Cardiac septum (tissue), 1 donor: ENCODE measurements at regions of chr11 and their contacts with region 1.

Region 1: GRCh38 chr11:61947486-61948210 is 2.5 kb upstream of the BEST1 start:
- DNase-seq: peak; percentile 93

Region 2: DNA sequence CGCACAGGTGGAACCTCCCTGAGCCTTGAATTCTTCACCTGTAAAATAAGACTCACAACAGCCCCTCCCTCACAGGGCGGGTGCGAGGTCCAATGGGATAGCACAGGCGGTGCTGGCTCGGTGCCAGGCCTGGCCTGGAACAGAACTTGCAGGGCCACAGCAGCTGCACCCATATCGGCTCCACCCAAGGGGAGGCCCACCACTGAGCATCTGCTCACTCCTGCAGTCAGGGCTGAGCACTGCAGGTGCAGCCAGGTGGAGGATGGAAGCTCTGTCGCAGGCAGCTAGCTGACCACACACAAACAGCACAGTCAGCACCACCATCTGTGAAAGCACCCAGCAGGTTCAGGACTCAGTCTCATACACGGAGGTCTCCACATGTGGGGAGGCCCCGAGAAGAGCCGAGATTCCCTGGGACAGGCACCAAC is 806.0 kb before region 1 on chr11:
- intact Hi-C with region 1: no loop called
- DNase-seq: no peak

Region 3: DNA sequence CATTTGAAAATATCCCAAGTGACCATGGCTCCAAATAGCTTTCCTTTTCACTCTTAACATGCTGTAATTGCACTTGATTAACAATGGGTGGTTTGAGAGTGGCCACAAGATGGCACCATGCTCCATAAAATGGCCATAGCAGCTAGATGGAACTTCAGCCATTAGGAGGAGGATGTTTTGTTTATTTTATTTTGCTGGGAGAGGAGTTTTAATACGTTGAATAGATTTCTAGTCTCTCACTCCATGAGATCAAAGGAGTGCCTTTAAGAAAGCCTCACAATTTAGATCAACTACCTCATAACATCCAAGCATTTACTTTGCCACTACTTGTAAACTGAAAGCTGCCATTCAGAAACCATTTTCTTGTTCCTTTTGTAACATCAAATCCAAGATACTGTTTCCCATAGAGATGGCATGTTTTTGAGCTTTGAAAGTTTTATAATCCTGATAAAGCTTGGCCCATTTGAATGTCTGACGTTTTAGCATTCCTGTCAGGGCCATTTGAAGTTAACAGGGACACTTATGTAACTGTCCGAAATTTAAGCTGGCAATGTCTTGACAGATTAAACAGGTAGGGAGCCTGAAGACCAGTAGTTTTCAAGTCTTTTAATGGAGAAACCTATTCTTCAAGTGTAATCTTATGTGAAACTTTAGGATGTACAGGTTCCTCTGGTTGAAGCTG is 150.2 kb before region 1 on chr11:
- intact Hi-C with region 1: loop called (anchors 1 kb)
- DNase-seq: no peak

Region 4: GRCh38 chr11:61871158-61871597 is 76.5 kb before region 1 on chr11:
- intact Hi-C with region 1: loop called (anchors 2 kb)
- DNase-seq: peak; percentile 90

Region 5: DNA sequence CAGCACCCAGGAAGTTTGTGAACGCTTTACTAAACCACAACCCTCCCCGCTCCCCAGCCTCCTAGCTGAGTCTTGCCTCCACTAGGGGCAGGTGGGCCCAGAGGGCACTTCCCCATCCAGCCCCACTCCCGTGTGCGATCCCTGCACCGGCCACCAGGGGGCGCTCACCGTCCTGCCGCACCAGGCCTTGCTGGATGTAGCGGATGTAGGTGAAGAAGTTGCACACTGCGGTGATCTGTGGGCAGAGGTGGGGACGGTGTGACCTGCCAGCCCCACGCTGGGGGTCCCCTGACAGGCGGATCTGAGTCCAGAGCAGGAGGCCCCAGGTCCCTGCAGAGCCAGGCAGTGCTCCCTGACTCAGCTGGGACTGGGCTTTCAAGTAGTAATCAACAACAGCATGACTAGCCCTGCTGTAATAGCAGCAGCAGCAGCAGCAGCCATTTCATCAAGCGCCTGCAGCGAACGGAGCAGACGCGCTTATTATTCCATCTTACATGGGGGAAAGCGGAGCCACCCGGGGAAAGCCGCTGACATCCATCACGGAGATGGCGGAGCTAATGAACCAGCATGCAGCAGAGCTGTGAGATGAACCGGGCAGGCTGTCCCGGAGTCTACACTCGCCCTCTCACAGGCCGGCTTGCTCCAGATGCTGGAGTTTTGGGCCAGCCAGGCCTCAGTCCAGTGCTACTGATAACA is 48.4 kb before region 1 on chr11:
- intact Hi-C with region 1: loop called (anchors 2 kb)
- DNase-seq: peak; percentile 97

Region 6: DNA sequence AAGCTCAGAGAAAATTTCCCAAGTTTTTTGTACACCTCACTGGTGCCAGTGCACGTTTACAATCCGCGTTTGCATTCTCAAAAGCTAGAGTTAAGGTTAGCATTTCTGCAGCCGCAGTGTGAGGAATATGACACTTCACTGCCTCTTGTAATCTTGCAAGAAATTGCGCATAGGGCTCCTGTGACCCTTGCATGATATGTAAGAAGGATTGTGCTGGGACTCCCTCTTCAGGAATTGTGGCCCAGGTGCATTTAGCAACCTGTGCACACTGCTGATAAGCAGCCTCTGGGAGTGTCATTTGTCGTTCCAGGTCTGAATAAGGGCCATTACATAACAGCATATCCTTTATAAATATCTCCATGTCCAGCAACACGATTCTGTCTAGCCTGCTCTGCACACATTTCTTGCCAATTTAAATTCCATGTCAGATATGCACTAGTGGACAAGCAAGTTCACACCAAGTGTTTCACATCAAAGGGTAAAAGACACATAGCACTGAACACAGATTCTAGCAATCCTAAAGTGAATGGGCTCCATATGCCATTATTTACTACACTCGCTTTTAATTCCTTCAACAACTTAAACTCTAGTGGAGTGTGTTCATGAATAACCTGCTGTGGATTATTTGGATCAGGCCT is 107.0 kb after region 1 on chr11:
- intact Hi-C with region 1: loop called (anchors 10 kb)
- DNase-seq: no peak

Region 7: DNA sequence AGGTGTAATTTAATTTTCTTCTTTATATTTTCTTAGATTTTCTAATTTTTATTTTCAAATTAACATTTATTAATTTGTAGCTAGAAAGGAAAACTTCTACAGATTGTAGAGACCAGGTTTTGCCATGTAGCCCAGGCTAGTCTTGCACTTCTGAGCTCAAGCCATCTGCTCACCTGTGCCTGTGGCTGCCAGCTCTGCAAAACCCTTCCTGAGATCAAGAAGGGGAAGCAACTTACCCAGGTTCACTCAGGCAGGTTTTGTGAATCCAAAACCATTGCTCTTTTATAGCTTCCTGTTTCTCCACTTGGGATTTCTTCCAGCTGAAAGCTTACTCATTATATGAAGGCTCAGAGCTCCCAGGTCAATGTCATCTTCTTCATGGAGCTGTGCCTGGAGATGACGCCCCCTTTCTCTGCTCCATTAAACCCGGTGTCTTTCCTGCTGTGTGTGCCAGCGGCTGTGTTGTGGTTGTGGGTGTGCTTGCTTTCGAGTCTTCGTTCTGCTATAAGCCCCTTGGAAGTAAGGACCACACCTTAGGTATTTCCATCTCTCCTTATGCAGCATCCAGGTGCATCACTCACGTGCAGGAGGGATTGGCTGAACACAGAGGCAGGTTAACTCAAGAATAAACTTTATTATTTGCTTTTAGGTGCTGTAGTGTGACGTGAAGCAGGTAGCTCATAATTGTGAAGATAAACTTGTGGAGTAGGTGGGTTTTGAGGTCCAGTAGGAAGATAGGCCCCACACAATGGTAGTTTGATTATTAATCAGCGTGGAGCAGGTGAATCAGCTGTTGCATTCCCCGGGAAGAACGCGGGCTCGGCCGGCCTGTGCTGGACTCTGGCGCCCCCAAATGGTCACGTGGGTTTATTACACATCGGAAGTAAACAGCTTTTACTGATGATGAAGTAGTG is 134.0 kb after region 1 on chr11:
- intact Hi-C with region 1: loop called (anchors 5 kb)
- DNase-seq: peak; percentile 95

Region 8: DNA sequence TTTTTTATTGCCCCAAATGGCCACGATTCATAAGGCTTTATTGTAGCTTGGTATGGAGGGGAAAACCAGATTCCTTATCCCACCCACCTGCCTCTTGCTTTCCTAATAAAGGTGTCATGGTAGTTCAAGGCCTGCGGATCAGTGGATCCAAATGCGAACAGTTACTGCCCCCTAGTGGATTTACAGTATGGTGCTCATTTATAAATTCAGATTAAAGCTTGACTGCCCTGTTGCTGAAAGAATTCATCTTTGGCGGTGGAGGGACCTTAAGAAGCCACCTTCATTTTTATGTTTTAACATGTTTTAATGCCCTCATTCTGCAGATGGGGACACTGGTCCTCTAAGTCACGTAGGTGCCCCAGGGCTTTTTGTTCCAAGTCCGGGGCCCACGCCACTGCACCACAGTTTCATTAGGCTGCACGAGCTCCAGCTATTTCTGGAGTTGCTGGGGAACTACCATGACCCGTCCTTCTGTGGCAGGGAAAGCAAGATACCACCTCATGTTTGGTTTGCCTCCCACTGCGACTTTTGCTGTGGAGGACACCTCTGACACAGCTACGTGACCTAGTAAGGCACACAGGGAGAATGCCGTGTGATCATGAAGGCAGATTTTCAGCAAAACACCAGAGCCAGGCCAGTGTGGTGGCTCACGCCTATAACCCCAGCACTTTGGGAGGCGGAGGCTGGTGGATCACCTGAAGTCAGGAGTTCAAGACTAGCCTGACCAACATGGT is 160.5 kb after region 1 on chr11:
- intact Hi-C with region 1: no loop called
- DNase-seq: no peak

Region 9: DNA sequence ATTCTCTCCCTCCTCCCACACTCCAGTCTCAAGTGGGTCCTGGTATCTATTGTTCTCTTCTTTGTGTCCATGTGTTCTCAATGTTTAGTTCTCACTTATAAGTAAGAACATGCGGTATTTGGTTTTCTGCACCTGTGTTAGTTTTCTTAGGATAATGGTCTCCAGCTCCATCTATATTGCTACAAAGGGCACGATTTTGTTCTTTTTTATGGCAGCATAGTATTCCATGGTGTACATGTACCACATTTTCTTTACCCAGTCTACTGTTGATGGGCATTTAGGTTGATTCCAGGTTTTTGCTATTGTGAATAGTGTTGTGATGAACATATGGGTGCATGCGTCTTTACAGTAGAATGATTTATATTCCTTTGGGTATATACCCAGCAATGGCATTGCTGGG is 171.9 kb after region 1 on chr11:
- intact Hi-C with region 1: no loop called
- DNase-seq: no peak